Posterior vena cava (tissue), 2 donors: ENCODE measurements at regions of chr12 and their contacts with region 1.

Region 1: GRCh38 chr12:66467932-66468331 is 165.6 kb downstream of the HELB start:
- DNase-seq: no peak

Region 2: DNA sequence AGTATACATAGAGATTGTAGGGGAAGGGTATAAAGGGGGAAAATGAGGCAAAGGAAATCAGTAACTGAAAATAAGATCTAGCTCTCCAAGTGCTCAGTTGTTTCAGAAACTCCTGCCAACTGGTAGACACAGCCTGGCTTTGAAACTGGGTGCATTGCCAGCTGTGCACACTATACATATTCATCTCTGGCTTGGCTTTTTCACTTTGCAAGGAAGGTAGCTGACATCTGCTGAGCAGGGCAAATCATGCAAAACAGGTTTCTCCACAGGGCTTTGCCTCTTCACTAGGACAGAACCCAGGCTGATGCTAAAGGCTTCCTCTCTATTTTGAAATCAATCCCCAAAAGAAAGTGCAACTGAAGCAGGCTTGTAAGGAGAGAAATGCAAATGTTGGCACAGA is 64.2 kb before region 1 on chr12:
- intact Hi-C with region 1: no loop called
- DNase-seq: no peak

Region 3: GRCh38 chr12:66438593-66438992 is 29.3 kb before region 1 on chr12:
- intact Hi-C with region 1: no loop called
- DNase-seq: no peak

Region 4: GRCh38 chr12:66497008-66497897 is 29.3 kb after region 1 on chr12:
- intact Hi-C with region 1: loop called in 1 of 2 experiments (anchors 2 kb)
- DNase-seq: no peak

Region 5: DNA sequence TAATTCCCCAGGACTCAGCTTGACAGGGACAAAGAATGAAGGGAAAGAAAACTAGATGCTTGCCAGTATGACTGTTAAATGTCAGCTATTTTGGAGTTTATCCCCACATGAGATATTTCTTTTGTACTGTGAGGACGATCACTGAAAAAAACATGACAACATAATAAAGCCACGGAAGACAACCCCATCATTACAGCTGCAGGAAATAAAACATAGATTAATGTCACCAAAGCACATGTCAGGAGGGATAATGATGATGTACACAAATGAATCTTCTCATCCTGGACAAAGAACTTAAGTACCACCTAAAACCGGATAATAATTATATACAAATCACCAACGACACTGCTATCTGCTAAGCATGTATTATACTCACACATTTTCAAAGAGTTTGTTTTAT is 295.5 kb after region 1 on chr12:
- intact Hi-C with region 1: no loop called
- DNase-seq: no peak